Ascending aorta (tissue), 2 donors: ENCODE measurements at regions of chr1 and their contacts with region 1.

Region 1: DNA sequence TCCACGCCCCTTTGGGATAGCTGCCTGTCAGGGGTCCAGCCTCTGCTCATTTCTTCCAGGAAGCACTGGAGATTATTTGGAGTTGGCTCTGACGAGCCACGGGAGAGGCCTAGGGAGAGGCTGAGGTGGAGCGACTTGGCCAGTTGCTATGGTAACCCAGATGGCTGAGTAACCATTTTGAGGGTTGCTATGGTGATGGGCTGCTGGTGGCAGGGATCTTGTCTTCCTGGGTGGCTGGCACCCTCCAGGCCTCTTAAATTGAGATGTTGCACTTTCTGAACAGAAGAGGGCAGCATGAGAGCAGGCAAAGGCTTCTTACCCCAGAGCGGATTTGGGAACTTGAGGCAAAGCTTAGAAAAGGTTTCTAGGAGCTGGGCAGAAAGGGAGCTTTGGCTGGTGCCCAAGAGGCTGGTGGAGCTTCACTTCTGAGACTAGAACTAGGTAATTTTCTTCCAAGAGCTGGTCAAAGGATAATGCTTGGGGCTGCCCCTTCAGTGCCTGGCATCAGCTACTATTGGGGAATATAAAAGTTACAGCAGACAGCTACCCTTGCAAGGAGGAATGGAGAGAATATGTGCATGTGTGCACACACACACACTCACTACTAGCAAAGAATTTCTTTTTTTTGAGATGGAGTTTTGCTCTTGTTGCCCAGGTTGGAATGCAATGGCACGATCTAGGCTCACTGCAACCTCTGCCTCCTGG is 72.5 kb downstream of the NDUFS5 start:
- DNase-seq: peak; percentile 49 to 90
- H3K4me3 ChIP-seq: no peak overlapping the region
- H3K27ac ChIP-seq: no peak overlapping the region
- H3K4me1 ChIP-seq: peaks cover 0 to 2% of the 10 kb centered on the region in 2 donors
- H3K27me3 ChIP-seq: no peaks in the 10 kb centered on the region
- CTCF ChIP-seq: peak; percentile 76 to 79 (median 78)

Region 2: GRCh38 chr1:39132505-39133339 is 34.0 kb after region 1 on chr1:
- intact Hi-C with region 1: loop called (anchors 5 kb)
- DNase-seq: peak; percentile 11 to 89
- H3K4me3 ChIP-seq: peak overlapping the region in 1 of 2 donors; percentile 39
- H3K27ac ChIP-seq: peak overlapping the region; percentile 71 to 73
- H3K4me1 ChIP-seq: peaks cover 4 to 33% of the 10 kb centered on the region in 2 donors
- H3K27me3 ChIP-seq: no peaks in the 10 kb centered on the region
- CTCF ChIP-seq: peak in 2 of 3 experiments; percentile 29 to 53

Region 3: GRCh38 chr1:39538588-39539465 is 440.1 kb after region 1 on chr1:
- intact Hi-C with region 1: loop called (anchors 1 kb)
- DNase-seq: peak in 1 of 2 donors; percentile 81
- H3K4me3 ChIP-seq: no peak overlapping the region
- H3K27ac ChIP-seq: no peak overlapping the region
- H3K4me1 ChIP-seq: no peaks in the 10 kb centered on the region
- H3K27me3 ChIP-seq: no peaks in the 10 kb centered on the region
- CTCF ChIP-seq: peak; percentile 82 to 90 (median 83)

Region 4: GRCh38 chr1:39639305-39640130 is 540.8 kb after region 1 on chr1 and contains the start of gene HEYL:
- intact Hi-C with region 1: loop called (anchors 10 kb)
- DNase-seq: peak in 1 of 2 donors; percentile 88
- H3K4me3 ChIP-seq: peak within 1 kb of the TSS; percentile 76 to 83
- H3K27ac ChIP-seq: peak within 1 kb of the TSS; percentile 96 to 98
- H3K4me1 ChIP-seq: peaks cover 3 to 19% of the 10 kb centered on the region in 2 donors
- H3K27me3 ChIP-seq: no peaks in the 10 kb centered on the region
- CTCF ChIP-seq: peak; percentile 73 to 77 (median 76)
- total RNA-seq, gene HEYL: 34.0 TPM